Activated CD8-positive, alpha-beta T cell treated with anti-CD3 and anti-CD28 coated beads, Interleukin-2, amount 10 ng/mL, durations not matched to agents 7 days and 5 days (primary cell): ENCODE measurements at regions of chr2 and their contacts with region 1.

Region 1: GRCh38 chr2:36785179-36785795 is 88.8 kb downstream of the VIT start:
- DNase-seq: peak; percentile 72
- ATAC-seq: peak; percentile 84
- H3K4me3 Mint-ChIP-seq: no peak overlapping the region
- H3K27ac Mint-ChIP-seq: no peak overlapping the region
- H3K4me1 Mint-ChIP-seq: peaks cover 12% of the 10 kb centered on the region
- H3K27me3 Mint-ChIP-seq: peaks cover 24% of the 10 kb centered on the region

Region 2: GRCh38 chr2:36708041-36708741 is 77.1 kb before region 1 on chr2:
- CTCF ChIA-PET with region 1: no interaction called
- POLR2A ChIA-PET with region 1: no interaction called
- DNase-seq: no peak
- ATAC-seq: no peak
- H3K4me3 Mint-ChIP-seq: no peak overlapping the region
- H3K27ac Mint-ChIP-seq: no peak overlapping the region
- H3K4me1 Mint-ChIP-seq: no peaks in the 10 kb centered on the region
- H3K27me3 Mint-ChIP-seq: peaks cover 2% of the 10 kb centered on the region

Region 3: DNA sequence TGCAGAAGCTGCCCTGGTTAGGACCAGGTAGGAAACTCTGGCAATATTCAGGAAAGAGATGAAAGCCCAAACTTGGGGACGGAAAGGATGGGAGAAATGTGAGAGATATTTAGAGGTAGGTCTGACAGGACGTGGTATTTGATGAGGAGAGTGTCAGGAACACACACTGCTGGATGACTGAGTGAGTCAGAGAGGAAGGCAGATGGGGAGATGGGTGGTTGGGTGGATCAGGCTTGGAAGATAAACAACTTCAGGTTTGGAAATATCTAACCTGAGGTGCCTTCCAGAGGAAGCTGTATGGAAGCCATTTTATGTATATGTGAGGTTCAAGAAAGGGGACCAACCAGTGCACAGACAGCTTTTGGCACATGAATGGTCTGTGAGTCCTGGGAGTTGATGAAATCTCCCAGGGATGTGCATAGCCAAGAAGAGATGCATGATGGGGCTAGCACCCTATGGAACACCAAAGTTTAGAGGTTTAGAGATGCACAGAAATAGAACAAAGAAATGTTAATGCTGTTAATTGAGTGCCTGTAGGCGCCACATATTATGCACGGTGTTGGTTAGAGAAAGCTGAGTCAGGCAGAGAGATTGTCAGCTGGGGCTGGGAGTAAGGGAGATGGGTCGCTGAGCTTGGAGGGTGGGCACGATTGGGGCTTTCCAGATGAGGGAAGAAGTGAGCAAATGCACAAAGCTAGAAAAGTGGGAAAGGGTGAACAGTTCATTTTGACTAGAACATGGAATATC is 12.2 kb after region 1 on chr2:
- CTCF ChIA-PET with region 1: interaction called, 28 read pairs
- POLR2A ChIA-PET with region 1: no interaction called
- DNase-seq: no peak
- ATAC-seq: no peak
- H3K4me3 Mint-ChIP-seq: no peak overlapping the region
- H3K27ac Mint-ChIP-seq: no peak overlapping the region
- H3K4me1 Mint-ChIP-seq: peaks cover 2% of the 10 kb centered on the region
- H3K27me3 Mint-ChIP-seq: peaks cover 22% of the 10 kb centered on the region

Region 4: DNA sequence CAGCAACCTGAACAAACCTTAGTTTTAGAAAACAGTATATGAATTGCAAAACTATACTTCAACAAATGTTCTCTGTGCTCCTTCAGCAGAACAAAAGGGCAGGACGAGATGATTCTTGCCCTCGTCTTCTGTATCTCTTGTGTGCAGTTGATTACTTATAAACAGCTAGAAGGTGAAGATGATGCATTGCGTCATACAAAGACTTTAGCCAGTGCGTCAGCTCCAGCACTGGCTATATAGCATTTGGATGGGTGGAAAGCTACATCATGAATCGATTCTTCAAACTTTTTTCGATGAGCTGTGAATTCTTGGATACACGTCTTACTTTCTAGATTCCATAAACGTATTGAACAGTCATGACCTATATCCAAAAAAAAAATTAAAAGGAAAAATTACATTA is 64.0 kb after region 1 on chr2:
- CTCF ChIA-PET with region 1: interaction called, 10 read pairs
- POLR2A ChIA-PET with region 1: no interaction called
- DNase-seq: no peak
- ATAC-seq: no peak
- H3K4me3 Mint-ChIP-seq: no peak overlapping the region
- H3K27ac Mint-ChIP-seq: no peak overlapping the region
- H3K4me1 Mint-ChIP-seq: no peaks in the 10 kb centered on the region
- H3K27me3 Mint-ChIP-seq: no peaks in the 10 kb centered on the region